Posterior vena cava (tissue), 2 donors: ENCODE measurements at regions of chr20 and their contacts with region 1.

Region 1: GRCh38 chr20:31951530-31952453 is at the start of gene PDRG1:
- DNase-seq: peak; percentile 99
- total RNA-seq, gene PDRG1: 5.0 to 5.3 TPM

Region 2: DNA sequence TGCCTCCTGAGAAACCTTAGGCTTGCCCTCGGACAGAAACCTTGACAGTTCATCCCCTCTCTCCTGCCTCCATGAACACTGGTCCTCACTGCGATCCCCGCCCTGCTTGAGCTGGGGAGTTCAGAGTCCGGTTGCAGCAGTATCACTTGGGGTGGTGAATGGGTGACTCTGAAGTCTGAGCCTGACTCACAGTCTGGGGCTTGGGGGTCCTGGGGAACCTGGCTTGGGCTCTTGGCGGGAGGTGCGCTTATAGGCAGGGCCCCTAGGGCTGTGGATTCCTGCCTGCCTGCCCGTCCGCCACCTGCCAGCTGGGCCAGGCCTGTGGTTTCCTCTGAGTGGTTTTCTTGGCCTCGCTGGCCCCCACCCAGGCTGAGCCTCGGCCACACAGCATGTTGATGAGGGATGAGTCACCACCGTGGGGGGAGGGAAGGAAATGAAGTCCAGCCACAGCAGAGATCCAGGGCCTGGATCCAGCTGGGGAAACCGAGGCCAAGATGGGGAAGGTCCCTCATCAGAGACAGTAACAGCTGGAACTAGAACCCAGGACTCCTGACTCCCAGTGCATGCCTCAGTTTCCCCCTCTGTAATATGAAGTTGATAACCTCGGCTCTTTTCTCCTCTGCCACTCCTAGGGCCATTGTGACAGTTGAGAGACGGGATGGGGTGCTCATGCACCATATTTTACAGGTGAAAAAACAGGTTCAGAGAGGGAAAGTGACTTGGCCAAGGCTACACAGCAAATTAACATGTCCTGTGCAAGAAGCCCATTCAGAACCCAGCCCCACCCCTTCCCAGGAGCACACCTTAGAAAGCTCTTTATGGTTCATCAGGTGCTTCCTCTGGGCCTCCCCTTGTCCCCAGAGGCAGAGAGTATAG is 115.6 kb before region 1 on chr20:
- intact Hi-C with region 1: loop called (anchors 5 to 10 kb)
- DNase-seq: peak; percentile 94

Region 3: GRCh38 chr20:31842471-31843157 is 109.2 kb before region 1 on chr20:
- intact Hi-C with region 1: loop called (anchors 5 to 10 kb)
- DNase-seq: peak; percentile 88